ENCODE measurements at regions of chr6 and their contacts with region 1.

Region 1: DNA sequence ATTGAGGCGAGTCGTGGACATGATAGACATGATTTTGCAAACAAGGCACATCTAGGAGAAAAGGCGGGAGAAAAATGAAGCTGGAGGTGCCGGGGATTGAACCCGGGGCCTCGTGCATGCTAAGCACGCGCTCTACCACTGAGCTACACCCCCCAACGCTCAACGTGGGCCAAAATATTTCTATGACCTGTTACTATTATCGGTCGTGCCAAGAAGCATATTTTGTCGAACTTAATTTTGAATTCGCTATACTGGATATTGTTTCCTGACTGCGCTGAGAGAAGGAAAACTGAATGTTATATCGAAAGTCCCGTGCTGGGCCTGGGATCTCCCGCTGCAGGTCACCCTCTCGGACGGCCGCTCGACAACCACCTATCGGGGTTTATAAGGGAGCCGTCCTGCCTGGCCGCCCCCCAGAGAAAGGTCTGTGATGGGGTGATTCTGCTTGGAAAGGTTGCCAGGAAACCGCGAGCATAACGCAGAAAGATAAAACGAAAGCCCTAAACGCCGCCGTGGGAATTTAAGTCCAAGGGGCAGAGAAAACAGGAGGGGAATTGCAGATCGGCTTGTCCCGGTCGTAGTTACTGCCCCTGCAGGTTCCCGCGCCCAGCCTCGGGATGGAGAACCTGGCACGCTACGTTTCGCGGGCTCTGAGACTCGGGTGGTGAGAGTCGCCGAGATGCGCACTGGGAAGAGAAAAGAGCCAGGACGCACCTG is 60.0 kb downstream of the TRIM27 start:
- DNase-seq: peak; percentile 69
- H3K4me3 ChIP-seq: peak overlapping the region; percentile 91 to 97
- H3K27ac ChIP-seq: peak overlapping the region; percentile 61 to 76
- H3K4me1 ChIP-seq: peaks cover 0 to 11% of the 10 kb centered on the region in 2 experiments; a peak in 2 of 4 replicates
- H3K27me3 ChIP-seq: peaks cover 8% of the 10 kb centered on the region; the same call in 1 of the 2 replicates
- CTCF ChIP-seq: no peak
- EP300 ChIP-seq: no peak
- RAD21 ChIP-seq: no peak

Region 2: DNA sequence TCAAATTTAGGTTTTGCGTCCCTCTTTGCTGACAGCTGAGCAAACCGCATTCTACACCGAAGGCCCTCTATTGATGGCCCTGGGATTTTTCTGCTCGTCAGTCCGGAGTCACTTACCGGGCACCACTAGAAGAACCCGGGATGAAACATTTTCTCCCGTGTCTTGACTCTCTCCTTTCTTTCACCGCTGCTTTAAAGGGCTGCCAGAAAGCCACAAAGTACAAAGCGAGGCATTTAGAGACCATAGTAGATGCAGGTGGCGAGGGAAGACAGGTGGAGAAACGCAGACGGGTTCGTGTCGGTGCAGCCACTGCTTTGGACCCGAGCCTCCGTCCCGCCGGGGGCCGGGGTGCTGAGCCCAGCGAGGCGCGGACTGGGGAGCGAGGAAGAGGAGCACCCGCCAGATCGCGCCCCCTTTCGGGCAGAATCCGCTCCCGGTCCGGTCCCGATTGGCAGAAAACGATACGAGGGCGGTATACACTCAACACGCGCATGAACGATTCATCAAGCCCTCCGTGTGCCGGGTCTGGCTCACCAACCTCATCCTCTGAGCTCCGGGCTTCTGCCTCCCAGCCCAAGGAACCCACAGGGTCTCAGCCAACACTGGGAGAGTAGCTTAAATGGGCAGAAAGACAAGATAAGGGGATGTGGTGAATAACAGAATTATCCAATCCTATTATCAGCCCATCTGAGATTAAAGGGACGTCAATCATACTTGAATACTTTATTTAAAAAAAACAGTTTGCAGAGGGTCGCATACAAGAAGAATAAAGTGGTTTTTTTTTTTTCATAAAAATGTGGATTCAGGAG is 24.9 kb before region 1 on chr6:
- CTCF ChIA-PET with region 1: interaction called, 18 read pairs
- POLR2A ChIA-PET with region 1: no interaction called
- DNase-seq: peak; percentile 80
- H3K4me3 ChIP-seq: peak overlapping the region; percentile 77 to 92
- H3K27ac ChIP-seq: peak overlapping the region; percentile 52 to 56; a peak in 3 of 4 replicates
- H3K4me1 ChIP-seq: peaks cover 5 to 6% of the 10 kb centered on the region in 2 experiments; a peak in 2 of 4 replicates
- H3K27me3 ChIP-seq: peaks cover 16% of the 10 kb centered on the region; the same call in 1 of the 2 replicates
- CTCF ChIP-seq: peak; percentile 79
- EP300 ChIP-seq: no peak
- RAD21 ChIP-seq: no peak

Region 3: GRCh38 chr6:28884423-28885131 is 20.8 kb after region 1 on chr6:
- CTCF ChIA-PET with region 1: interaction called, 3 read pairs
- POLR2A ChIA-PET with region 1: interaction called, 28 read pairs
- DNase-seq: peak; percentile 39
- H3K4me3 ChIP-seq: peak overlapping the region in 1 of 2 experiments; percentile 23; a peak in 1 of 4 replicates
- H3K27ac ChIP-seq: peak overlapping the region in 1 of 2 experiments; percentile 48; a peak in 2 of 4 replicates
- H3K4me1 ChIP-seq: no peaks in the 10 kb centered on the region
- H3K27me3 ChIP-seq: no peaks in the 10 kb centered on the region
- CTCF ChIP-seq: no peak
- EP300 ChIP-seq: no peak
- RAD21 ChIP-seq: no peak

Region 4: GRCh38 chr6:28895134-28895812 is 31.5 kb after region 1 on chr6:
- CTCF ChIA-PET with region 1: no interaction called
- POLR2A ChIA-PET with region 1: interaction called, 11 read pairs
- DNase-seq: peak; percentile 87
- H3K4me3 ChIP-seq: peak overlapping the region; percentile 63 to 79
- H3K27ac ChIP-seq: peak overlapping the region; percentile 93 to 97
- H3K4me1 ChIP-seq: no peaks in the 10 kb centered on the region; a peak in 1 of 4 replicates
- H3K27me3 ChIP-seq: no peaks in the 10 kb centered on the region
- CTCF ChIP-seq: no peak
- EP300 ChIP-seq: no peak
- RAD21 ChIP-seq: no peak

Region 5: GRCh38 chr6:28914941-28915340 is 51.2 kb after region 1 on chr6:
- CTCF ChIA-PET with region 1: no interaction called
- POLR2A ChIA-PET with region 1: no interaction called
- DNase-seq: no peak
- H3K4me3 ChIP-seq: no peak overlapping the region
- H3K27ac ChIP-seq: no peak overlapping the region
- H3K4me1 ChIP-seq: no peaks in the 10 kb centered on the region
- H3K27me3 ChIP-seq: no peaks in the 10 kb centered on the region
- CTCF ChIP-seq: no peak
- EP300 ChIP-seq: no peak
- RAD21 ChIP-seq: no peak